Activated naive CD4-positive, alpha-beta T cell treated with anti-CD3 and anti-CD28 coated beads for 36 hours (primary cell): ENCODE measurements at regions of chr6 and their contacts with region 1.

Region 1: DNA sequence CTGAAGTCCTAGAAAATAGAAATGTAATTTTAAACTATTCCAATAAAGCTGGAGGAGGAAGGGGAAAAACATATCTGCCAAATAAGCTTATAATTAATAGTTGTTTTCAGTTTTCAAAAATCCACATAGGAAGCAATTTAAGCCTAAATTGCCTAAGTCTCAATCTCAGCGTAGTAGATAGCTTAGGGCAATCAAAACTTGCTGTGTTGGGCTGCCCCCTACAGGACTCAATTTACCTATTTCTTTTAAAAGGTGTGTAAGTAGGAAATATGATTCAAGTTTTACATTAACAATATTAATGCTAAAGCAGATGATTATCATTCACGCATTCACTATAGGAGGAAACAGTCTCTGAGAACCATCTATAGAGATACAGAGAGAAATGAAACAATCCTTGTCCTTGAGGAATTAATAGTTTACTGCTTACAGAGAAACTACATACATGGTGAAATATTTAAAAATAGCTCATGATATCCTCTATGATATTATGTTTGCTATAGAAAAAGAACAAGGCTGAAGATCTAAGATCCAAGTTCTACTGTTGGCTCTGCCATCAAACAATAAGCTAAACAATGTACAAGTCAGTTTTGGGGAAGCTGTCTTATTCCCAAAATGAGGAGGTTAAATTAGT is 102.1 kb downstream of the ATG5 start:
- DNase-seq: peak; percentile 89
- H3K4me3 Mint-ChIP-seq: no peak overlapping the region
- H3K27ac Mint-ChIP-seq: no peak overlapping the region
- H3K4me1 Mint-ChIP-seq: peaks cover 18% of the 10 kb centered on the region
- H3K27me3 Mint-ChIP-seq: no peaks in the 10 kb centered on the region

Region 2: GRCh38 chr6:105087571-105088211 is 1135.7 kb before region 1 on chr6:
- CTCF ChIA-PET with region 1: no interaction called
- intact Hi-C with region 1: loop called (anchors 5 kb)
- DNase-seq: peak; percentile 53
- H3K4me3 Mint-ChIP-seq: no peak overlapping the region
- H3K27ac Mint-ChIP-seq: no peak overlapping the region
- H3K4me1 Mint-ChIP-seq: no peaks in the 10 kb centered on the region
- H3K27me3 Mint-ChIP-seq: peaks cover 4% of the 10 kb centered on the region

Region 3: DNA sequence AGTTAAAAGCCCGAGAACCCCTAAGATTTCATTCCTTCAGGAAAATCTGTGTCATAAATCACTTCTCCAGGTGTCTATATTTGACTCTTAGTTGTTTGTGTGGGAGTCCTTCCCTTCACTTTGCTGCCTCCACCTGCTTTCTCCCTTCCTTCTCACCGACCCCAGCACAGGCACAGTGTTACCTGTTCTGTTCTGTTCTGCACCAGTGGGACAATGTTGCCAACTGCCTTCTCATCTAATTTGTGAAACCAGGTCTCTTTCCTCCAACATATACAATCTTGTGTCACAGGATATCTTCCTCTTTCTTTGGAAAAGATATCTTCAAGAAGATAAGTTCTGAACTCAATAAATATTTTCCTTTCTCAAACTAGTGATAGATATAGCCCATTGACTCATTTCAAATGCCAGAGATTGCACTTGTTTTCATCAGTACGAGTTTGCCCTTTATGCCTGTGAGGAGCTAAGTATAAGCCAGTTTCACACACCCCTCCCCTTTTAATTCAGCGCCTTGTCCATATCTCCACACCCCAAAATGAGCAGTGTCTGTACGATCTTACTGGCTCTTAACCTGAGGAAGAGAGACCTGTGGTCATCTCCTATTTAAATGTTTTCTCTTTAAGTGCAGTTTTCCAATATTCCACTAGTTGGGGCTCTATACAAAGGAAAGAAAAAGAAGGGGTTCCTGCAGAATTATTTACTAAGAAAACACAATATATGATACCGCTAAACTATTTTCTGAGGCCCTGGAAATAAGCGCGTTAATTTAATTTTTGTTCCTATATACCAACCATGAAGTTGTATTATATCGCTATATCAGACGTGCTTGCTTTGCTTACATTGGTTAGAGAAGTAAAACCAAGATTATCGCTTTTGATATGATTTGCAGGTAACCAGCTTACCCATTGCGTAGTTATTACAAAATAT is 738.9 kb before region 1 on chr6:
- CTCF ChIA-PET with region 1: interaction called, 3 read pairs
- intact Hi-C with region 1: loop called (anchors 2 kb)
- DNase-seq: no peak
- H3K4me3 Mint-ChIP-seq: no peak overlapping the region
- H3K27ac Mint-ChIP-seq: no peak overlapping the region
- H3K4me1 Mint-ChIP-seq: no peaks in the 10 kb centered on the region
- H3K27me3 Mint-ChIP-seq: peaks cover 18% of the 10 kb centered on the region

Region 4: GRCh38 chr6:105733565-105734162 is 489.8 kb before region 1 on chr6:
- CTCF ChIA-PET with region 1: interaction called, 14 read pairs
- intact Hi-C with region 1: loop called (anchors 1 kb)
- DNase-seq: no peak
- H3K4me3 Mint-ChIP-seq: no peak overlapping the region
- H3K27ac Mint-ChIP-seq: no peak overlapping the region
- H3K4me1 Mint-ChIP-seq: peaks cover 3% of the 10 kb centered on the region
- H3K27me3 Mint-ChIP-seq: no peaks in the 10 kb centered on the region

Region 5: GRCh38 chr6:105872246-105872645 is 351.2 kb before region 1 on chr6:
- CTCF ChIA-PET with region 1: no interaction called
- intact Hi-C with region 1: loop called (anchors 5 kb)
- DNase-seq: no peak
- H3K4me3 Mint-ChIP-seq: no peak overlapping the region
- H3K27ac Mint-ChIP-seq: no peak overlapping the region
- H3K4me1 Mint-ChIP-seq: peaks cover 16% of the 10 kb centered on the region
- H3K27me3 Mint-ChIP-seq: peaks cover 21% of the 10 kb centered on the region

Region 6: GRCh38 chr6:106085984-106086813 is 137.2 kb before region 1 on chr6 and contains the start of gene PRDM1:
- CTCF ChIA-PET with region 1: interaction called, 27 read pairs
- intact Hi-C with region 1: loop called (anchors 1 kb)
- DNase-seq: peak; percentile 87
- H3K4me3 Mint-ChIP-seq: peak within 1 kb of the TSS; percentile 75
- H3K27ac Mint-ChIP-seq: peak within 1 kb of the TSS; percentile 6
- H3K4me1 Mint-ChIP-seq: peaks cover 51% of the 10 kb centered on the region
- H3K27me3 Mint-ChIP-seq: peaks cover 46% of the 10 kb centered on the region
- total RNA-seq, gene PRDM1: 3.4 to 4.0 TPM

Region 7: DNA sequence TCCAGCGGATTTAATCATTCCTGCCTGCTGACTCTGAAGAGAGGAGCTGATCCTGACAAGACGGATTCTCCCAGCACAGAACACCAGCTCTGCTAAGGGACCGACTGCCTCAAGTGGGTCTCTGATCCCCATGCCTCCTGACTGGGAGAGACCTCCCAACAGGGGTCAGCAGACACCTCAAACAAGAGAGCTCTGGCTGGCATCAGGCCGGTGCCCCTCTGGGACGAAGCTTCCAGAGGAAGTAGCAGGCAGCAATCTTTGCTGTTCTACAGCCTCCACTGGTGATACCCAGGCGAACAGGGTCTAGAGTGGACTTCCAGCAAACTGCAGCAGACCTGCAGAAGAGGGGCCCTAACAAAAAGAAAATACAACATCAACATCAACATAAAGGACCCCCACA is 40.0 kb after region 1 on chr6:
- CTCF ChIA-PET with region 1: no interaction called
- intact Hi-C with region 1: no loop called
- DNase-seq: no peak
- H3K4me3 Mint-ChIP-seq: no peak overlapping the region
- H3K27ac Mint-ChIP-seq: no peak overlapping the region
- H3K4me1 Mint-ChIP-seq: peaks cover 17% of the 10 kb centered on the region
- H3K27me3 Mint-ChIP-seq: no peaks in the 10 kb centered on the region

Region 8: DNA sequence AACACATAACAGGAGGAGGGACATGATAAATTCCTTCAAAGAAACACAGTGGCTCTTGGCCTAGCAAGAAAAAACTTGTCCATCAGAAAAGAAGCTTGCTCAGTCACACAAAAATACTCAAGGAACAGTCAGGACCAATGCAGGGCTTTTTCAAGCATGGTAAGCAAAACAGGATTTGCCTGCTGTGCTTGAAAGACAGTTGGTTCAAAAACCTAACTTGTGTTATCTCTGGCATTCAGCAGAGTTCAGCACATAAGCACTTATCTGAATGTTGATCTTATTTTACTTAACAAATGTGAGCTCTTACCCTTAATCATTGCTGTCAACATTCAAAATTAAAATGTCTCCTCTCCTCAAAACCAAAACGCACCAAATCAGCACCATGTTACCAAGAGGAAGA is 63.8 kb after region 1 on chr6:
- CTCF ChIA-PET with region 1: no interaction called
- intact Hi-C with region 1: no loop called
- DNase-seq: no peak
- H3K4me3 Mint-ChIP-seq: no peak overlapping the region
- H3K27ac Mint-ChIP-seq: no peak overlapping the region
- H3K4me1 Mint-ChIP-seq: peaks cover 24% of the 10 kb centered on the region
- H3K27me3 Mint-ChIP-seq: no peaks in the 10 kb centered on the region

Region 9: GRCh38 chr6:106300944-106301343 is 77.5 kb after region 1 on chr6:
- CTCF ChIA-PET with region 1: interaction called, 5 read pairs
- intact Hi-C with region 1: loop called (anchors 5 kb)
- DNase-seq: no peak
- H3K4me3 Mint-ChIP-seq: no peak overlapping the region
- H3K27ac Mint-ChIP-seq: no peak overlapping the region
- H3K4me1 Mint-ChIP-seq: no peaks in the 10 kb centered on the region
- H3K27me3 Mint-ChIP-seq: no peaks in the 10 kb centered on the region